ENCODE measurements at regions of chr12 and their contacts with region 1.

Region 1: DNA sequence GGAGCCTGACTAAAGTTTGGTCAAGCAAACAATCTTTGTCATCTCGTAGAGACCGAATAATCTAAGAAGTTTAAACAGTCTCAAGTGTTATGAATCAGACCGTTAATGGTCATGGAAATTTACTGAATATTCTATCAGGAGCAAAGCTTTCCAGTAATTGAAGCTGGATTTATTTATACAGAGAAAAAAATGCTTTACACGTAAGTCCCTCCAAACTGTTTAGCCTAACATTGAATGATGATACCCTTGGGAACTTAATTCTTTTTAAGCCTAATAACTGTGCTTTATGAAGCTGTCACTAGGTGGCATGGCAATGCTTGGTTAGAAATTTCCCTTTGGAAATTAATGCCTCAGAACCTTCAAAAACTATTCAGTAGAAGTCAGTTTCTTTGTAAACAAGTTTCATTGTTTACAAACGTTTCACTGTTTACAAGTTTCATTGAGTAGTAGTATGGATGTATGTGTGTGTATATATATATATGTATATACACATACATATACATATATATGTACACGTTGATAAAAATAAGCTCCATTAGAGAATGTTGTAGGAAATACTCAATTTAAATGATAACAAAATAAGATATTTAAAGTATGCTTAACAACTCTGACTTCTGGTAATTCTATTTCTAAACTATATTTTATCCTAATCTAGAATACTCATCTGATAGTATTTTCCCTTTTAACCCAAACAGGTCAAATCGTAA is 32.1 kb downstream of the DEPDC4 start:
- DNase-seq: peak; percentile 7
- ATAC-seq: no peak
- H3K4me3 Mint-ChIP-seq: no peak overlapping the region
- H3K27ac Mint-ChIP-seq: no peak overlapping the region
- H3K4me1 Mint-ChIP-seq: no peaks in the 10 kb centered on the region
- H3K27me3 Mint-ChIP-seq: no peaks in the 10 kb centered on the region
- CTCF ChIP-seq: peak; percentile 61

Region 2: DNA sequence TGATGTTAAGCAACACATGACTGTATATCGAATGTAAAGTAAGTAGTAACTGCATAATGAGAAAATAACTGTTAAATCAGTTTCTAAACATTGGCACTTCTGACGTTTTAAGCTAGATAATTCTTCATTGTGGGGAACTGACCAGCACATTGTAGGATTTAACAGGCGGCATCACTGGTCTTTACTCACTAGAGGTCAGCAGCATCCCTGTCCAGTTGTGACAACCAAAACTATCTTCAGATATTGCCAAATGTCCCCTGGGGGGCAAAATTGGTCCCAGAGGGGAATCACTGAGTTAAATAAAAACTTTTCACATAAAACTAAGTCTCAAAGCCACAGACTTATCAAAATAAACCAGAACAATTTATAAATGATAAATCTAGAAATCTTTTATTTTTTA is 157.4 kb before region 1 on chr12:
- CTCF ChIA-PET with region 1: no interaction called
- POLR2A ChIA-PET with region 1: no interaction called
- intact Hi-C with region 1: no loop called
- DNase-seq: no peak
- ATAC-seq: no peak
- H3K4me3 Mint-ChIP-seq: no peak overlapping the region
- H3K27ac Mint-ChIP-seq: no peak overlapping the region
- H3K4me1 Mint-ChIP-seq: no peaks in the 10 kb centered on the region
- H3K27me3 Mint-ChIP-seq: no peaks in the 10 kb centered on the region
- CTCF ChIP-seq: no peak

Region 3: GRCh38 chr12:100211698-100212097 is 23.1 kb before region 1 on chr12:
- CTCF ChIA-PET with region 1: no interaction called
- POLR2A ChIA-PET with region 1: no interaction called
- intact Hi-C with region 1: no loop called
- DNase-seq: no peak
- ATAC-seq: no peak
- H3K4me3 Mint-ChIP-seq: no peak overlapping the region
- H3K27ac Mint-ChIP-seq: no peak overlapping the region
- H3K4me1 Mint-ChIP-seq: peaks cover 2% of the 10 kb centered on the region
- H3K27me3 Mint-ChIP-seq: no peaks in the 10 kb centered on the region
- CTCF ChIP-seq: no peak

Region 4: DNA sequence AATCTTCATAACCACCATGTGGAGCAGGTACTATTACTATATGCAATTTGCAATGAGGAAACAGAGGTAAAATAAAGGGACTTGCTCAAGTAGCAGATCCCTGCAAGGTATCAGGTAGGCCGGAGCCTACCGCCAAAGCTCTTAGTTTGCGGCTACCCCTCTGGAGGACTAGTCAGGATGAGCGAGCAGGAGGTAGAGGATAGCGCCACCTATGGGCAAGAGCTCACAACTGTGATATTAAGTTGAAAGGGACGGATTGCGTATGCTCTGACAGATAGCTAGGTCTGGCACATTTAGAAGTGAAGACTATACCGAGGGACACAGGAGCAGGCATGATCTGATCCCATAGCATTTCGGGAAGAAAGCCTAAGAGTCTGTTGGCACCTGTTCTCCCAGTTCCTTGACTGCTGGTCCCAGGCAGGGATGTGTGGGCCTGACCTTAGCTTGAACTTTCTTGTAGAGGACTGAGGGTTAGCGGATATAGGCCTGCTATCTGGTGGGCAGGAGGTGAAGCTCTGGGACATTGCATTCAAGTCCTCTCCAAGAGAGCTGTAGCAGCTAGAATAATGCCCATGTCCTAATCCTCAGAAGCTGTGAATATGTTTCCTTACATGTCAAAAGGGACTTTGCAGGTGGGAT is 170.1 kb after region 1 on chr12:
- CTCF ChIA-PET with region 1: interaction called, 20 read pairs
- POLR2A ChIA-PET with region 1: no interaction called
- intact Hi-C with region 1: loop called (anchors 5 kb)
- DNase-seq: peak; percentile 67
- ATAC-seq: peak; percentile 69
- H3K4me3 Mint-ChIP-seq: no peak overlapping the region
- H3K27ac Mint-ChIP-seq: no peak overlapping the region
- H3K4me1 Mint-ChIP-seq: no peaks in the 10 kb centered on the region
- H3K27me3 Mint-ChIP-seq: peaks cover 8% of the 10 kb centered on the region
- CTCF ChIP-seq: peak; percentile 68

Region 5: DNA sequence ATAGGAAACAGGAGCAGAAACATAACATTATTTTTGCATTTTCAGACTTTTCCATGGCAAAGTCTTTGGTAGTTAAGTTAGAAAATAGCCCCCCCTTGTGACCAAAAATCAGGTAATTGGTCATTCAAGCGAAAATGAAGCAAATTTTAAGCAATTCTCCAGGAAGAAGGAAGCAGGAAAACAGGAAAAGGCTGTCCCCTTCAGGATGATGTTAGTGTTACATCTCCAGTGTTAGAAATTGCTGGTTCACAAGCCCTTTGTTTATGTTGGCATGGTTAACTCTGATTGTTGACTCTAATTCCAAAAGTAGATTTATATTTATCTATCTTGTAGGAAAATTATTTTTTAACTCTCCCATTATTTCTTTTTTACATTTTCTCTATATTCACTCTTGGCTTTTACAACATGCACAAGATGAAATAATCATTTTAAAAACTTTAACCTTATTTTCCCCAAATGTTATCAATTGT is 319.9 kb after region 1 on chr12:
- CTCF ChIA-PET with region 1: interaction called, 10 read pairs
- POLR2A ChIA-PET with region 1: no interaction called
- intact Hi-C with region 1: loop called (anchors 2 kb)
- DNase-seq: no peak
- ATAC-seq: no peak
- H3K4me3 Mint-ChIP-seq: no peak overlapping the region
- H3K27ac Mint-ChIP-seq: no peak overlapping the region
- H3K4me1 Mint-ChIP-seq: no peaks in the 10 kb centered on the region
- H3K27me3 Mint-ChIP-seq: peaks cover 4% of the 10 kb centered on the region
- CTCF ChIP-seq: peak; percentile 58